ENCODE measurements at regions of chr12 and their contacts with region 1.

Region 1: DNA sequence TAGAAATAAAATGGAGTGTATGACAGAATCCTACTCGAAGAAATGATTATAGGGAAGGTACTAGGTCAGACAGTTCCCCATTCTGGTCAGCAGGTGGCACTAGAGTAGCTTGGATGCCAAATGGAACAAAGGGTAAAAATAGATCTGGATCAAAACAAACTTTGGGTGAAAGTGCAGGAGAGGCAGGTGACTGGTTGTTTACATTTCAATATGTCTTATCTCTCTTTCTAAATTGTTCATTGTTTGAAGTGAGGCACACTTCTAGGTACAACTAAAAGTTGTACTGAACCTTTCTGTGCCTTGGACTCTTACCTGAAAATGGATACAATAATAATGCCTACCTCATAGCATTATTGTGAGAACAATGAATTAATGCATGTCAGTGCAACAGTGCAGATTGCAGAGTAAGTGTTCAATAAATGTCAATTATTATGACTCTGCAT is 62.0 kb upstream of the OSBPL8 start:
- DNase-seq: peak; percentile 80
- H3K4me3 Mint-ChIP-seq: no peak overlapping the region
- H3K27ac Mint-ChIP-seq: no peak overlapping the region
- H3K4me1 Mint-ChIP-seq: no peaks in the 10 kb centered on the region
- H3K27me3 Mint-ChIP-seq: peaks cover 5% of the 10 kb centered on the region

Region 2: DNA sequence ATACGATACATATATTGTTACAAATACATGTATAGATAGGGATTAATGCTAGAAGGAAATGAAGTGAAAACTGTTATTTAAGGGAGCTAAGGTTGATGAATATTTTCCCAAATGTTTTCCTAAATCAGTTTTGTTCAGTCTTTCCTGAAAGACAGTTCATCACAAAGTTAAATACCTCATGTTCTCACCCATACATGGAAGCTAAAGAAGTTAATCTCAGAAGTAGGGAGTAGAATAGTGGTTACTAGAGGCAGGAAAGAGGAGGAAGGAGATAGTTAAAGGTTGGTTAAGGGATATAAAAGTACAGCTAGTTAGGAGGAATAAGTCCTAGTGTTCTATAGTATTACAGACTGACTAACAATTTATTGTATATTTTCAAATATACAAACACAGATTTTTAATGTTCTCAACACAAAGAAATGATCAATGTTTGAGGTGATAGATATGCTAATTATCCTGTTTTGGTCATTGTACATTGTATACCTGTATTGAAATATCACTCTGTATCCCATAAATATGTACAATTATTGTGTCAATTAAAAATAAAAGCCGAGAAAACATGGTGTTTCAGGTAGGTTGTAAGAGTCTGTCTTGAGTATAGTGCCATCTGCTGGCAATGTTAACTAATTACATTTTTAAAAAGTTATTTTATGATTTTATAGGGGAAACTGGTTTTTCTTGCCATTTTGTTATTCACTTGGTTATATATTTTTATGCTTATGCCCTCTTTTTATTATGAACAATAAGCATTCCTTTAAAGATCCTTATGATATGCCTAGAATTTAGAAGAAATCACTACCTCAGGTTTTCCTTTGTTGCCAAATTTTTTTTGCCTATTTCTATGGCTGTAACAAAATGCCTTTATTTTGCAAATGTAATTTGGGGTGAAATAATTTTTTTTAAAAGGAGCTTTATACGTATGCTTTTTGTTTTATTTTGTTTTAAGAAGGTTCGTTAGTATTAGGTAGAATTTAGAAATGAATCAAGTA is 169.3 kb after region 1 on chr12:
- CTCF ChIA-PET with region 1: interaction called, 38 read pairs
- DNase-seq: no peak
- H3K4me3 Mint-ChIP-seq: no peak overlapping the region
- H3K27ac Mint-ChIP-seq: no peak overlapping the region
- H3K4me1 Mint-ChIP-seq: no peaks in the 10 kb centered on the region
- H3K27me3 Mint-ChIP-seq: no peaks in the 10 kb centered on the region

Region 3: DNA sequence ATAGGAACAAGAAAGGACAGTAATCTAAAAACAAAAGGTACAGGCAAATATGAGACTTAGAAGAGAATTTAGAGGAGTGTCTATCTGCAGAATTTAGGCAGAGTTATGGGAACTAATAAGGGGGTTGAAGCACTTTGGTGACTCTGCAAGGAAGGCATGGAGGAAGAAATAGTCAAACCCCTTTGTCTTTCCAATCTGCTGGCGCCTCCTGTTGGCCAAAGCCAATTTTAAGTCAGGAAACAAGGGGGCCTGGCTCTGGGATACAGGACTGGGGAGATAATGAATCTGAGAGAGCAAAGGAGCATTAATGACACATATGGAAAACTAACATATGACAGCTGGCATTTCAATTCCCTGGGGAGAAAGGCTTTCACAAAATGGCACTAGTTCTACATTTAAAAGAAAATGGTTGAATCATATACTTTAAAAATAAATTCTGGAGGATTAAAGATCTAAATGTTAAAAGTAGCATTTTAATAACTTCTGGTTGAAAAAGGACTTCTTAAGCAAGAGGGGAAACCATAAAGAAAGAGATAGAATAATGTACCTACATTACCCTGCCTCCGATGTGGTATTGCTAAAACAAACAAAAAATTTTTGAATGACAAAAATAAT is 305.7 kb after region 1 on chr12:
- CTCF ChIA-PET with region 1: interaction called, 13 read pairs
- DNase-seq: peak; percentile 53
- H3K4me3 Mint-ChIP-seq: no peak overlapping the region
- H3K27ac Mint-ChIP-seq: no peak overlapping the region
- H3K4me1 Mint-ChIP-seq: no peaks in the 10 kb centered on the region
- H3K27me3 Mint-ChIP-seq: no peaks in the 10 kb centered on the region

Region 4: GRCh38 chr12:77010691-77011548 is 389.3 kb after region 1 on chr12:
- CTCF ChIA-PET with region 1: interaction called, 20 read pairs
- DNase-seq: peak; percentile 82
- H3K4me3 Mint-ChIP-seq: no peak overlapping the region
- H3K27ac Mint-ChIP-seq: no peak overlapping the region
- H3K4me1 Mint-ChIP-seq: peaks cover 3% of the 10 kb centered on the region
- H3K27me3 Mint-ChIP-seq: peaks cover 15% of the 10 kb centered on the region

Measured in activated naive CD4-positive, alpha-beta T cell treated with anti-CD3 and anti-CD28 coated beads, Interleukin-2, amount 10 ng/mL, durations not matched to agents 7 days and 5 days (primary cell).